Gastrocnemius medialis (tissue), 4 donors: ENCODE measurements at regions of chr7 and their contacts with region 1.

Region 1: DNA sequence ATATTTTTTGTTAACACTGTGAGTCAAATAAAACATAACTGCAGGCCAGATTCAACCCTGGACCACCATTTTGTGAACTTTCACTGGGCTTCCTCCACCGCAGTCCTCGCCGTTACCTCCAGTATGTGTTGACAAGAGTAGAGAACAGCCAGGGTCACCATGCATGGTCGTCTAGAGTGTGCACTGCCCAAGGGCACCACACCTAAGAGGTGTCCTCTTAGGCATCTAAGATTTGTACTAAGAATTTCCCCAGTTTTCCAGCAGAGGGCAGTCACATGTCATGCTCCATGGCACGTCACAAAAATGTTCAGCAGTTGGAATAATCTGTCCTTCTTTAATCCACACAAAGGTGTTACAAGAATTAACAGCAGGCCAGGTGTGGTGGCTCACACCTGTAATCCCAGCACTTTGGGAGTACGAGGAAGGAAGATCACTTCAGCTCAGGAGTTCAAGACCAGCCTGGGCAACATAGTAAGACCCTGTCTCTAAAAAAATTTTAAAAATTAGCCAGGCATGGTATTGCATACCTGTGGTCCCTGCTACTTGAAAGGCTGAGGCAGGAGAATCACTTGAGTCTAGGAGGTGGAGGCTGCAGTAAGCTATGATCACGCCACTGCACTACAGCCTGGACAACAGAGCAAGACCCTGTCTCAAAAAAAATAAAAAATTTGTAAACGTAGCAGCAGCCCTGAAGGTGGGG is 71.2 kb upstream of the FOXK1 start:
- DNase-seq: peak; percentile 20 to 24
- ATAC-seq: peak; percentile 55 to 58
- H3K4me3 ChIP-seq: no peak overlapping the region
- H3K27ac ChIP-seq: no peak overlapping the region
- H3K4me1 ChIP-seq: peaks cover 14 to 22% of the 10 kb centered on the region in 2 donors
- H3K27me3 ChIP-seq: peaks cover 0 to 2% (median 0%) of the 10 kb centered on the region in 3 donors
- CTCF ChIP-seq: peak; percentile 76 to 88 (median 81)
- POLR2A ChIP-seq: no peak

Region 2: GRCh38 chr7:4097001-4097609 is 513.8 kb before region 1 on chr7:
- in situ Hi-C with region 1: no loop called
- intact Hi-C with region 1: no loop called
- DNase-seq: no peak
- ATAC-seq: no peak
- H3K4me3 ChIP-seq: no peak overlapping the region
- H3K27ac ChIP-seq: no peak overlapping the region
- H3K4me1 ChIP-seq: no peaks in the 10 kb centered on the region
- H3K27me3 ChIP-seq: no peaks in the 10 kb centered on the region
- CTCF ChIP-seq: no peak
- POLR2A ChIP-seq: no peak

Region 3: DNA sequence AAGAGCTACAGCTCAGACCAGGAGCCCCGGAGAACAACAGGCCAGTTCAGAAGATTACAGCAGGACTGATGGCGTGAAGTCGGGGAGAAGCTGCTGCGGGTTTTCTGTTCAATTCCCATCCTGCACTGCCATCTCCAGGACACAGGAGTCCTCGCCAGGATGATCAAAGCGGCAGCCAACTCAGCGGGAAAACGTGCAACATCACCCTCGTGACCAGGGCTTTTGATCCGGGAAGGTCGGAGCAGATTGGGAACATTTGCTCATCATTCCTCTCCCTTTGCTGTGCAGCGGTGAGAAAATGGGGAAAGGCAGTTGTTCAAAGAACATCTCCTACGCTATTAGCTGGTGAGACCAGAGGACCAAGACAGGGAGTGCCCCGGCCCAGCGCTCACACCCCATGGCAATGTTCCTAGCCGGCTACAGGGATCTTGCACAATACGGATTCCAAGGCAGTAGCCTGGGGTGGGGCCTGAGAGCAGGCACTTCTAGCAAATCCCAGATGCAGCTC is 20.8 kb after region 1 on chr7:
- in situ Hi-C with region 1: no loop called
- intact Hi-C with region 1: loop called (anchors 1 kb)
- DNase-seq: peak; percentile 72 to 85
- ATAC-seq: peak; percentile 96 to 98
- H3K4me3 ChIP-seq: peak overlapping the region; percentile 31 to 46 (median 40)
- H3K27ac ChIP-seq: peak overlapping the region; percentile 58 to 74 (median 64)
- H3K4me1 ChIP-seq: peaks cover 10 to 13% of the 10 kb centered on the region in 2 donors
- H3K27me3 ChIP-seq: no peaks in the 10 kb centered on the region
- CTCF ChIP-seq: peak; percentile 64 to 80 (median 75)
- POLR2A ChIP-seq: no peak

Region 4: DNA sequence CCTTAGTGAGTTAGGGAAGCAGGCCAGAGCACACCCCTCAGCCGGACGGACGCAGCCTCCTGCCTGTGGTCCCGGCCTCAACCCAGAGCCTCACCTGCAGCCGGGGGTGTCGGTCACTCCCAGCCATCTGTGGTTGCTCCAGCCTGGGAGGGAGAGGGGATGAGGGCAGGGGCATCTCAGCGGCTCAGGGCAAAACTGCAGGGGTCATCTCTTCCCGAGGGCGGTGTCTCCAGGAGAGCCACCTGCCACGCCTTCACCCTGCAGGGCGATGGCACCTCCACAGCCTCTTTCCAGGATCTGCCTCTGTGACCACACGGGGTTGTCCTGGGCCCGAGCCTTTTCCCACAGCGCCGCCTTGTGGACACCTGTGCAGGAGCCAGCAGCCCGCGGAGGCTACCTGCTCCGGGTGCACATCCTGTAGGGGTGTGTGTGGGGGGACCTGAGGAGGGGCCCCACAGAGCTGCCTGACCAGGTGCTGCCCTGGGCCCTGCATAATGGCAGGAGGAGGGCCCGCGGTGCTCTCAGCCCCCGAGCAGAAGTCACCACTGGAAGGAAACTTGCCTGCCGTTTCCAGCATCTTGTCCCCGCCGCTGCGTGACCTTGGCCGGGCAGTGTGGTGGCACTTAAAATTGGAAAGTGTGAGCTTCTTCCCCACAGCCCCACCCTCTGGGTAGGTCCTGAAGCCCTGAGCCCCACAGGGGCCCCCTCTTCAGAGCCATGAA is 143.0 kb after region 1 on chr7:
- in situ Hi-C with region 1: no loop called
- intact Hi-C with region 1: loop called (anchors 1 kb)
- DNase-seq: peak; percentile 65 to 66
- ATAC-seq: peak; percentile 87 to 95
- H3K4me3 ChIP-seq: no peak overlapping the region
- H3K27ac ChIP-seq: no peak overlapping the region
- H3K4me1 ChIP-seq: no peaks in the 10 kb centered on the region
- H3K27me3 ChIP-seq: no peaks in the 10 kb centered on the region
- CTCF ChIP-seq: peak; percentile 82 to 96 (median 95)
- POLR2A ChIP-seq: no peak